GM18951 (cell line): ENCODE measurements at regions of chr5 and their contacts with region 1.

Region 1: GRCh38 chr5:95846554-95847260 is 24.2 kb upstream of the GLRX start:
- POLR2A ChIP-seq: no peak

Region 2: GRCh38 chr5:95664204-95664786 is 182.4 kb before region 1 on chr5:
- in situ Hi-C with region 1: loop called (anchors 10 kb)
- POLR2A ChIP-seq: no peak

Region 3: GRCh38 chr5:95759005-95759404 is 87.7 kb before region 1 on chr5:
- in situ Hi-C with region 1: no loop called
- POLR2A ChIP-seq: no peak

Region 4: GRCh38 chr5:95786901-95787300 is 59.8 kb before region 1 on chr5:
- in situ Hi-C with region 1: loop called (anchors 5 kb)
- POLR2A ChIP-seq: no peak